BJ (cell line): ENCODE measurements at regions of chr7 and their contacts with region 1.

Region 1: DNA sequence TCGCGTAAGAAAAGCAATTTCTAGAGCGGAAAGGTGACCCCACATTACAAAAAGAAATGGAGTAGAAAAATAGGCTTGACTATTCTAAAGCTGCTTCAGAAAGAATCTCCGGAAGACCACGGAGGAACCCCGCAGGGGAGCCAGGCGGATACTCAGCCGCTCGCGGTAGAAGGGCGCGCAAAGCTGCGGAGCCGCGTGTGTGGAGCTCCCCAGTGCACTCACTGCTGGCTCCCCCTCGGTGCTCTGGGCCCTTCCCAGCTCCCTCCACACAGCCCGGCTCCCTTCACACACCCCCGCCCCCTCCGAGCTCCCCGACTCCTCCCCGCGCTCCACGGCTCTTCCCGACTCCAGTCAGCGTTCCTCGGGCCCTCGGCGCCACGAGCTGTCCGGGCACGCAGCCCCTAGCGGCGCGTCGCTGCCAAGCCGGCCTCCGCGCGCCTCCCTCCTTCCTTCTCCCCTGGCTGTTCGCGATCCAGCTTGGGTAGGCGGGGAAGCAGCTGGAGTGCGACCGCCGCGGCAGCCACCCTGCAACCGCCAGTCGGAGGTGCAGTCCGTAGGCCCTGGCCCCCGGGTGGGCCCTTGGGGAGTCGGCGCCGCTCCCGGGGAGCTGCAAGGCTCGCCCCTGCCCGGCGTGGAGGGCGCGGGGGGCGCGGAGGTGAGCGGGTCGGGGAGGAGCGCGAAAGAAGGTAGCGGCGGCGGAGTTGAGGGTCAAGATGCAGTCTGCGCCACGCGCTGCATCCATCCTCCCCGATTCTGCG is at the start of gene STEAP2:
- DNase-seq: peak; percentile 48
- H3K4me3 ChIP-seq: peak within 1 kb of the TSS; percentile 76
- H3K27me3 ChIP-seq: no peaks in the 10 kb centered on the region
- CTCF ChIP-seq: peak; percentile 78
- polyA plus RNA-seq, gene STEAP2: 2.1 and 5.1 TPM in 2 replicates

Region 2: GRCh38 chr7:90155206-90155605 is 56.4 kb before region 1 on chr7:
- CTCF ChIA-PET with region 1: interaction called, 13 read pairs
- POLR2A ChIA-PET with region 1: no interaction called
- DNase-seq: no peak
- H3K4me3 ChIP-seq: no peak overlapping the region
- H3K27me3 ChIP-seq: no peaks in the 10 kb centered on the region; the same call in 1 of the 2 replicates
- CTCF ChIP-seq: no peak

Region 3: GRCh38 chr7:90192872-90193750 is 18.5 kb before region 1 on chr7:
- CTCF ChIA-PET with region 1: interaction called, 20 read pairs
- POLR2A ChIA-PET with region 1: interaction called, 15 read pairs
- DNase-seq: peak; percentile 76
- H3K4me3 ChIP-seq: no peak overlapping the region
- H3K27me3 ChIP-seq: no peaks in the 10 kb centered on the region
- CTCF ChIP-seq: no peak

Region 4: DNA sequence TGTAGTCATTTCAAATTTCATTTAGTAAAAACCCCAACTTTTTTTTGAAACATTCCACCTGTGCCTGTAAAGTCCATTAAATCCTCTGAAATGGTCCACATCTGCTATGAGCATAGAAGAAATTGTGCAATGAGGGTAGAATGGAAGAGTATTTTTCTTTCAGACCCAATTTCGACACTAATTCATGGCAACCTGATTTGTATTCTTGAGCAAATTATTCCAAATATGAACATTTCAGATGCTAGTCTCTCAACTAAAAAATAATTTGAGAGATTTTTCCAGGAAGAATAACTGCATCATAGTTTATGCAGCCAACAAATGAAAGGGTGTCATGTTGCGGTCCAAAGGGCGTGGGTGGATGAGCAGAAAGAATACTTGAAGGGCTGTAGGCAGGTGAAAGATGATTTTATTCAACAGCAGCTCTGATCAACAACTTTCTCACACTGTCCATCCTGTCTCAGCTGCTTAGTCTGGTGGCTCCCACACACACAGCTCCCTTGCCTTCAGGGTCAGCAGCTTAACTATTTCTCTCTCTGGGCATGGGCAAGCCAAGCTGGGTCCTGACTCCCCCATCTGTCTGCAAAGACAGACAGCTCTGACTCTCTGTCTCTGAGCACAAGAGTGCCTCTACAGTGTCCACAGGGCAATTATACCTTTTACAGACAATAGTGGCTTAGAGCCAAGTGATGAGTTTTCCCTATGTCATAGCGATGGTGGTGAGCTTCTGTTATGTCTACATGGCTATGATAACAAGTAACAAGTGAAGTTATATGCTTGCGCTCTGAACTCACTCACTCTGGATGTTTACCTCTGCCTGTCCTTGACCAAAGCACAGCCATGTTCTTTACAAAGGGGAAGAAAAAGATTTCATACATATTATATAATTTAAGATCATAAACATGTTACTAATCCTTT is 11.5 kb after region 1 on chr7:
- CTCF ChIA-PET with region 1: interaction called, 13 read pairs
- POLR2A ChIA-PET with region 1: no interaction called
- DNase-seq: peak; percentile 20
- H3K4me3 ChIP-seq: no peak overlapping the region
- H3K27me3 ChIP-seq: no peaks in the 10 kb centered on the region
- CTCF ChIP-seq: no peak

Region 5: DNA sequence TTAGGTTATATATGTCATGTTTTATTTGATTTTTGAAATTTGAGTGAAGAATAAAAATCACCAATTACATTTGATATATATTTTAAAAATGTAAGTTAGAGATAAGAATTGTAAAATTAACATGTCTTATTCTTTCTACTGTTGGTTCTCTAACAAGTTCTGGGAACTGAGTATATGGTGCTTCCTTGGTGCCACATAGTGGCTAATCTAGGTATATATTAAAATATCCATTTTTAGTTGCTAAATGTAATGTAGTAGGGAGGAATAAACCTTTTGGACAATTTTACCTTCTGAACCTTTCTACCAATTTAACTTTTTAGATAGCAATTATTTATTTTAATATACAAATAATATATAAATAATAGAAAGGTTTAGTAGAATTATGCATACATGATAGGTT is 50.9 kb after region 1 on chr7:
- CTCF ChIA-PET with region 1: interaction called, 12 read pairs
- POLR2A ChIA-PET with region 1: no interaction called
- DNase-seq: no peak
- H3K4me3 ChIP-seq: no peak overlapping the region
- H3K27me3 ChIP-seq: no peaks in the 10 kb centered on the region
- CTCF ChIP-seq: peak; percentile 43; the same call in 1 of the 2 replicates